ENCODE measurements at regions of chr19 and their contacts with region 1.

Region 1: GRCh38 chr19:49877020-49877878 is at the starts of genes AKT1S1 and TBC1D17:
- DNase-seq: peak; percentile 90 to 100 (median 99)
- ATAC-seq: peak; percentile 81
- H3K4me3 ChIP-seq: peak within 1 kb of the TSS; percentile 96
- H3K4me3 Mint-ChIP-seq: no peak within 1 kb of the TSS
- H3K27ac ChIP-seq: peak within 1 kb of the TSS; percentile 97
- H3K27ac Mint-ChIP-seq: no peak within 1 kb of the TSS
- H3K4me1 ChIP-seq: peaks cover 11 to 20% of the 10 kb centered on the region in 2 donors
- H3K4me1 Mint-ChIP-seq: peaks cover 23 to 35% (median 28%) of the 10 kb centered on the region in 7 donors
- H3K27me3 ChIP-seq: no peaks in the 10 kb centered on the region
- H3K27me3 Mint-ChIP-seq: no peaks in the 10 kb centered on the region
- total RNA-seq, gene AKT1S1: 15.9 to 25.7 (median 21.2) TPM
- total RNA-seq, gene TBC1D17: 42.9 to 106 (median 53.0) TPM

Region 2: GRCh38 chr19:48333467-48334384 is 1543.5 kb before region 1 on chr19:
- CTCF ChIA-PET with region 1: no interaction called
- POLR2A ChIA-PET with region 1: no interaction called
- intact Hi-C with region 1: loop called in 1 of 2 experiments (anchors 2 kb)
- DNase-seq: peak; percentile 90 to 96 (median 93)
- ATAC-seq: peak; percentile 77
- H3K4me3 ChIP-seq: peak overlapping the region; percentile 77
- H3K4me3 Mint-ChIP-seq: peak overlapping the region; percentile 83 to 100 (median 97)
- H3K27ac ChIP-seq: peak overlapping the region; percentile 95
- H3K27ac Mint-ChIP-seq: peak overlapping the region; percentile 93 to 100 (median 97)
- H3K4me1 ChIP-seq: peaks cover 32 to 43% of the 10 kb centered on the region in 2 donors
- H3K4me1 Mint-ChIP-seq: peaks cover 25 to 61% (median 47%) of the 10 kb centered on the region in 7 donors
- H3K27me3 ChIP-seq: no peaks in the 10 kb centered on the region
- H3K27me3 Mint-ChIP-seq: no peaks in the 10 kb centered on the region

Region 3: GRCh38 chr19:48720613-48721296 is 1156.5 kb before region 1 on chr19:
- CTCF ChIA-PET with region 1: no interaction called
- POLR2A ChIA-PET with region 1: no interaction called
- intact Hi-C with region 1: loop called in 1 of 2 experiments (anchors 10 kb)
- DNase-seq: peak; percentile 77 to 93 (median 89)
- ATAC-seq: peak; percentile 91
- H3K4me3 ChIP-seq: peak overlapping the region; percentile 92
- H3K4me3 Mint-ChIP-seq: peak overlapping the region; percentile 80 to 99 (median 97)
- H3K27ac ChIP-seq: peak overlapping the region; percentile 80
- H3K27ac Mint-ChIP-seq: peak overlapping the region; percentile 98 to 100 (median 99)
- H3K4me1 ChIP-seq: peaks cover 5 to 17% of the 10 kb centered on the region in 2 donors
- H3K4me1 Mint-ChIP-seq: peaks cover 19 to 30% (median 25%) of the 10 kb centered on the region in 7 donors
- H3K27me3 ChIP-seq: no peaks in the 10 kb centered on the region
- H3K27me3 Mint-ChIP-seq: no peaks in the 10 kb centered on the region

Region 4: GRCh38 chr19:49640113-49640898 is 236.9 kb before region 1 on chr19 and contains the start of gene RRAS:
- CTCF ChIA-PET with region 1: no interaction called
- POLR2A ChIA-PET with region 1: interaction called, 3 read pairs
- intact Hi-C with region 1: loop called in 1 of 2 experiments (anchors 1 kb)
- DNase-seq: peak; percentile 91 to 100 (median 99)
- ATAC-seq: peak; percentile 78
- H3K4me3 ChIP-seq: peak within 1 kb of the TSS; percentile 64
- H3K4me3 Mint-ChIP-seq: peak within 1 kb of the TSS; percentile 86 to 98 (median 93)
- H3K27ac ChIP-seq: peak within 1 kb of the TSS; percentile 95
- H3K27ac Mint-ChIP-seq: peak within 1 kb of the TSS; percentile 93 to 99 (median 99)
- H3K4me1 ChIP-seq: peaks cover 27 to 40% of the 10 kb centered on the region in 2 donors
- H3K4me1 Mint-ChIP-seq: peaks cover 57 to 67% (median 63%) of the 10 kb centered on the region in 7 donors
- H3K27me3 ChIP-seq: no peaks in the 10 kb centered on the region
- H3K27me3 Mint-ChIP-seq: peaks cover 0 to 6% (median 0%) of the 10 kb centered on the region in 5 donors
- total RNA-seq, gene RRAS: 11.0 to 18.6 (median 13.8) TPM

Region 5: GRCh38 chr19:49766007-49766937 is 111.0 kb before region 1 on chr19:
- CTCF ChIA-PET with region 1: no interaction called
- POLR2A ChIA-PET with region 1: interaction called, 6 read pairs
- intact Hi-C with region 1: loop called (anchors 1 kb)
- DNase-seq: peak; percentile 86 to 100 (median 99)
- ATAC-seq: peak; percentile 92
- H3K4me3 ChIP-seq: peak overlapping the region; percentile 79
- H3K4me3 Mint-ChIP-seq: peak overlapping the region; percentile 89 to 98 (median 96)
- H3K27ac ChIP-seq: peak overlapping the region; percentile 80
- H3K27ac Mint-ChIP-seq: peak overlapping the region; percentile 84 to 98 (median 96)
- H3K4me1 ChIP-seq: peaks cover 11 to 16% of the 10 kb centered on the region in 2 donors
- H3K4me1 Mint-ChIP-seq: peaks cover 15 to 43% (median 36%) of the 10 kb centered on the region in 7 donors
- H3K27me3 ChIP-seq: no peaks in the 10 kb centered on the region
- H3K27me3 Mint-ChIP-seq: no peaks in the 10 kb centered on the region

Region 6: DNA sequence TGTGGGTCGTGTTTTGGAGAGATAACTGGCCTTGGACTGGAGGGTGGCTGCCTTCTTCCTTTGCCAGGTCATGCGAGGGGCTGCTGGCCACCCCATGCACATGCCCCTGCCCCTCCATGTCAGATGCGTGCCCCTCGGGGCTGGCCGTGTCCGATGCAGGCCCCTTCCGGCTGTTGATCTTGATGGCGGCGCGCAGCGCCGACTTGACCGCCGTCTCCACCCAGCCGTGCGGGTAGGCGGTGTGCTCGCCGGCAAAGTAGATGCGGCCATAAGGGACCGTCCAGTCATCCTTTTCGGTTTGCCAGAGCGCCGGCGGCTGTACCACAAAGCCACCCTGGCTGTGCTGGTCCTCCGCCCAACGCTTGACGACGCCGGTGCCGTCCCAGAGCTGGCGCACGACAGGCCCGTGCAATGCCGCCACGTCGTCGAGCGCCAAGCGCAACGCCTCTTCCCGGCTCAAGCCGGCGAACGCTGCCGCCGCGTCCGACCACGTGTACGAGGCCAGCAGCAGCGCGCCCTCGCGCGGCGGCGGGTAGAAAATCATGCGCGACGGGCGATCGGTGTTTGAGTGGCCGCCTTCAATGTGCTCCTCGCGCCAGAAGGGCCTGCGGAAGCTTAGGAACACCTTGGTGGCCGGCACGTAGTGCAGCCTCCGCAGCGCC is 12.6 kb after region 1 on chr19:
- CTCF ChIA-PET with region 1: no interaction called
- POLR2A ChIA-PET with region 1: interaction called, 7 read pairs
- intact Hi-C with region 1: loop called (anchors 1 kb)
- DNase-seq: peak; percentile 56 to 81 (median 75)
- ATAC-seq: peak; percentile 87
- H3K4me3 ChIP-seq: peak overlapping the region; percentile 69
- H3K4me3 Mint-ChIP-seq: peak overlapping the region; percentile 70 to 84 (median 79)
- H3K27ac ChIP-seq: no peak overlapping the region
- H3K27ac Mint-ChIP-seq: peak overlapping the region in 5 of 9 donors; percentile 25 to 79 (median 51)
- H3K4me1 ChIP-seq: peaks cover 0 to 5% of the 10 kb centered on the region in 2 donors
- H3K4me1 Mint-ChIP-seq: peaks cover 0 to 16% (median 3%) of the 10 kb centered on the region in 7 donors
- H3K27me3 ChIP-seq: no peaks in the 10 kb centered on the region
- H3K27me3 Mint-ChIP-seq: no peaks in the 10 kb centered on the region

Region 7: DNA sequence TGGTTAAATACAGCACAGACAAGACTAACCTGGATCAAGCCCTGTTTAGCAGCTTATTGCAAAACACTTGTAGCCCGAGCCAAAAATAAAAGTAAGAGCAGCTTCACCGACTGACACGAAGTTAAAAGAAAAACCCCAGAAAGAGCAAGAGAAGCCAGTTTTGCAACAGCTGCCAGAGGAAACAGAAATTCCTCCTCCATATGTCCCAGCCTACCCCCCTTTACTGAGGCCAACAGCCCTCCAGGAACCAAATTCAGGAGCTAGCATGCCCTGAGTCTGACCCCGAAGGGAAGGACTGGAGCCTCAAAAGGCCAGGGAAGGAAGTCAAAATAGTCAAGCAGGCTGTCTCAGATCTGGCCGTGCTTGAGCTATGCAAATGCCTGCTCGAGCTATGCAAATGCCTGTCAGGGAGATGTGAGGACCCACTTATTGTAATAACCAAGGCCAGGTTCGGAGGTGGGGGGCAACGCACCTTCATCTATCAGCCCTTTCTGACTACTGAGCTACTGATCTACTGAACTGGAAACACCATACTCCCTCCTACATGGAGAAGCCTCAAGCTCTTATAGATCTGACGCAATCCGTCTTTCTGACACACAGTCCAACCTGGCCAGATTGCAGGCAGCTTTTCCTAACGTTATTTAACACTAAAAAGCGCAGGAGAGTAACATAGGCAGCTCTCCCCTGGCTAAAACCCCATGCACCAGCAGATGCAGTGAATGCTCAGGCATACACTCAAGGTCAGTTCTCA is 77.0 kb after region 1 on chr19:
- CTCF ChIA-PET with region 1: no interaction called
- POLR2A ChIA-PET with region 1: no interaction called
- intact Hi-C with region 1: no loop called
- DNase-seq: no peak
- ATAC-seq: no peak
- H3K4me3 ChIP-seq: no peak overlapping the region
- H3K4me3 Mint-ChIP-seq: no peak overlapping the region
- H3K27ac ChIP-seq: no peak overlapping the region
- H3K27ac Mint-ChIP-seq: no peak overlapping the region
- H3K4me1 ChIP-seq: no peaks in the 10 kb centered on the region
- H3K4me1 Mint-ChIP-seq: peaks cover 0 to 12% (median 8%) of the 10 kb centered on the region in 7 donors
- H3K27me3 ChIP-seq: no peaks in the 10 kb centered on the region
- H3K27me3 Mint-ChIP-seq: peaks cover 5 to 38% (median 15%) of the 10 kb centered on the region in 5 donors

Region 8: GRCh38 chr19:50242581-50242980 is 365.3 kb after region 1 on chr19:
- CTCF ChIA-PET with region 1: no interaction called
- POLR2A ChIA-PET with region 1: no interaction called
- intact Hi-C with region 1: no loop called
- DNase-seq: no peak
- ATAC-seq: no peak
- H3K4me3 ChIP-seq: no peak overlapping the region
- H3K4me3 Mint-ChIP-seq: no peak overlapping the region
- H3K27ac ChIP-seq: no peak overlapping the region
- H3K27ac Mint-ChIP-seq: no peak overlapping the region
- H3K4me1 ChIP-seq: no peaks in the 10 kb centered on the region
- H3K4me1 Mint-ChIP-seq: no peaks in the 10 kb centered on the region
- H3K27me3 ChIP-seq: no peaks in the 10 kb centered on the region
- H3K27me3 Mint-ChIP-seq: peaks cover 0 to 24% (median 20%) of the 10 kb centered on the region in 5 donors

Region 9: GRCh38 chr19:50329146-50329925 is 452.1 kb after region 1 on chr19 and contains the start of gene KCNC3:
- CTCF ChIA-PET with region 1: no interaction called
- POLR2A ChIA-PET with region 1: no interaction called
- intact Hi-C with region 1: loop called in 1 of 2 experiments (anchors 5 kb)
- DNase-seq: peak in 8 of 9 donors; percentile 69 to 96 (median 86)
- ATAC-seq: peak; percentile 77
- H3K4me3 ChIP-seq: peak within 1 kb of the TSS; percentile 39
- H3K4me3 Mint-ChIP-seq: peak within 1 kb of the TSS; percentile 72 to 97 (median 86)
- H3K27ac ChIP-seq: no peak within 1 kb of the TSS
- H3K27ac Mint-ChIP-seq: peak within 1 kb of the TSS; percentile 55 to 96 (median 87)
- H3K4me1 ChIP-seq: peaks cover 42 to 62% of the 10 kb centered on the region in 2 donors
- H3K4me1 Mint-ChIP-seq: peaks cover 43 to 75% (median 73%) of the 10 kb centered on the region in 7 donors
- H3K27me3 ChIP-seq: peaks cover 15 to 28% of the 10 kb centered on the region in 2 donors
- H3K27me3 Mint-ChIP-seq: peaks cover 20 to 62% (median 41%) of the 10 kb centered on the region in 5 donors
- total RNA-seq, gene KCNC3: 1.9 to 11.1 (median 2.4) TPM